ENCODE measurements at regions of chrX and their contacts with region 1.

Region 1: GRCh38 chrX:113741744-113742143 is 842.1 kb upstream of the HTR2C start:
- DNase-seq: peak; percentile 52
- H3K4me3 ChIP-seq: no peak overlapping the region
- H3K27ac ChIP-seq: no peak overlapping the region
- H3K4me1 ChIP-seq: no peaks in the 10 kb centered on the region
- H3K27me3 ChIP-seq: no peaks in the 10 kb centered on the region
- CTCF ChIP-seq: peak; percentile 16 to 28
- POLR2A ChIP-seq: no peak

Region 2: DNA sequence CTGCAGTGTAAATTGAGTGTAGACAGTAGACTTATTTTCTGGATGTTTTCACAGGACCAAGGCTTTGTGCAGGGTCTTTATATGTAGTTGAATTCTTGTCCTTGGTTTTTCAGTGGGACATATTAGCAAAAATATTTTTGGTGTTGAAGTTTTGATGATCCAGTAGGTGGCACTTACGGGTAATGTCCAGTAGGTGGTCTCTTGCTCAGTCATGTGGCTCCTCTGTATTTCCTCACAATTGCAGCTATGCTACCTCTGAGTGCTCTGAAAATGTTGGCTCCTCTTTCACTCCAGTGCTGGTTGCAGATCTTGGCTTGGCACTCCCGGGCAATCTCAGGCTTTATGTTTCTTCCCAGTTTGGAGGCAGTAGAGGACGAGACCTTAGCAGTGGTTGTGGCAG is 481.3 kb before region 1 on chrX:
- CTCF ChIA-PET with region 1: interaction called, 18 read pairs
- POLR2A ChIA-PET with region 1: no interaction called
- dilution Hi-C with region 1: no loop called
- intact Hi-C with region 1: loop called (anchors 1 kb)
- DNase-seq: peak; percentile 1
- H3K4me3 ChIP-seq: no peak overlapping the region
- H3K27ac ChIP-seq: no peak overlapping the region
- H3K4me1 ChIP-seq: no peaks in the 10 kb centered on the region
- H3K27me3 ChIP-seq: no peaks in the 10 kb centered on the region
- CTCF ChIP-seq: peak in 1 of 2 donors; percentile 26
- POLR2A ChIP-seq: no peak

Region 3: DNA sequence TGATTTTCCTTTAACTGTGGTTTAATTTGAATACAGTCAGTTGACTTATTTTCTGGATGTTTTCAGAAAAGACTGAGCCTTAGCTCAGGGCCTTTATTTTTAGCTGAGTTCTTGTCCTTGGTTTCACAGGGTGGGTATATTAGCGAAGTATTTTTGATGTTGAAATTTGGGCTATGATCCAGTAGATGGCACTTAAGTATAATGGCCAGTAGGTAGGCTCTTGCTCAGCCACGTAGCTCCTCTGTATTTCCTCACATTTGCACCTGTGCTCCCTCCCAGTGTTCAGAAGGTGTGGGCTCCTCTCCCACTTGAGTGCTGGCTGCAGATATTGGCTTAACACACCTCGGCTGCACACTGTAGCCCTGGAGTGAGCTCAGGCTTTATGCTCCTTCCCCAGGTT is 351.2 kb before region 1 on chrX:
- CTCF ChIA-PET with region 1: interaction called, 3 read pairs
- POLR2A ChIA-PET with region 1: no interaction called
- dilution Hi-C with region 1: no loop called
- intact Hi-C with region 1: loop called (anchors 5 kb)
- DNase-seq: no peak
- H3K4me3 ChIP-seq: no peak overlapping the region
- H3K27ac ChIP-seq: no peak overlapping the region
- H3K4me1 ChIP-seq: peaks cover 7% of the 10 kb centered on the region
- H3K27me3 ChIP-seq: no peaks in the 10 kb centered on the region
- CTCF ChIP-seq: no peak
- POLR2A ChIP-seq: no peak

Region 4: DNA sequence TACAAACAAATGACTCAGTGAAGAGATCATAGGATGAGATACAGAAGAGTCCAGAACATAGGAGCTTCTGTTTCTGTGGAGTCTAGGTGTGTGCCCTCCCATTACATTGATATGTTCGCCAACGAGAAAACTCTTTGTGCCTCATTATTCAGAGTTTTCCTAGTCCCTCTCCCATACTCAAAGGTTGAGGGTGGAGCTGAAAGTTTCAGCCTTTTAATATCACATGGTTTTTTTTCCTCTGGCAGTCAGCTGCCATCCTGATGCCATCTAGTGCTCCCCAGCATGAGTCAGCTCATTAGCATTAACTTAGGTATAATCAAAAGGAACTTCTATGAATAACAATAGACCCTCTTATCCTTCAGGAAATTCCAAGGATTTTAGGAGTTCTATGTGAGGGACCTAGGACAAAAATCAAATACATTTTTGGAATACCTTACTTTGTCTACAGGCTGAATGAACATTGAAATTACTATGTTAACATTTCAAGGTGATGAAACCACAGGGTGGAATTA is 341.5 kb before region 1 on chrX:
- CTCF ChIA-PET with region 1: interaction called, 10 read pairs
- POLR2A ChIA-PET with region 1: no interaction called
- dilution Hi-C with region 1: no loop called
- intact Hi-C with region 1: no loop called
- DNase-seq: peak; percentile 73
- H3K4me3 ChIP-seq: peak overlapping the region in 1 of 3 experiments; percentile 5
- H3K27ac ChIP-seq: peak overlapping the region; percentile 93
- H3K4me1 ChIP-seq: peaks cover 27% of the 10 kb centered on the region
- H3K27me3 ChIP-seq: no peaks in the 10 kb centered on the region
- CTCF ChIP-seq: no peak
- POLR2A ChIP-seq: no peak

Region 5: DNA sequence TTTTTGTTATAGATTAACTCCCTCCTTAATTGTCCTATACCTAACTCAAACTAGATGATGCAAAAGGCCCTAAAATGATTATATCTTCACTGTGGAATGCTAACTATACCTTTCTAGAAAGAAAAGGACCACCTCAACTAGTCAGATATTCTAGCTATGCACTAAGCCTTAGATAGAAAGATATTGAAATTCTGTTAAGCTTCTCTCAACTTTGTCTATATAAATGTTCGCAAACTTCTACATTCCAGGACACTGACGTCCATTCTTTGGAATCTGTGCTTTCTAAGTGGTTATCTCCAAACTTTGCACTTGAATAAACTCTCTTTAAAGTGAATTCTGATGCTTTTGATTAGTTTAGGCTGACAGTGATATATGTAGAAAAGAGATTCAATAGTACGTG is 103.2 kb after region 1 on chrX:
- CTCF ChIA-PET with region 1: no interaction called
- POLR2A ChIA-PET with region 1: no interaction called
- dilution Hi-C with region 1: no loop called
- intact Hi-C with region 1: no loop called
- DNase-seq: no peak
- H3K4me3 ChIP-seq: no peak overlapping the region
- H3K27ac ChIP-seq: no peak overlapping the region
- H3K4me1 ChIP-seq: no peaks in the 10 kb centered on the region
- H3K27me3 ChIP-seq: no peaks in the 10 kb centered on the region
- CTCF ChIP-seq: no peak
- POLR2A ChIP-seq: no peak

Measured in endothelial cell of umbilical vein (primary cell).